ENCODE measurements at regions of chr12 and their contacts with region 1.

Region 1: GRCh38 chr12:6807170-6807569 is 14.5 kb upstream of the GPR162 start:
- DNase-seq: no peak
- H3K4me3 ChIP-seq: no peak overlapping the region
- H3K27ac ChIP-seq: no peak overlapping the region
- H3K4me1 ChIP-seq: no peaks in the 10 kb centered on the region
- H3K27me3 ChIP-seq: no peaks in the 10 kb centered on the region
- CTCF ChIP-seq: no peak

Region 2: DNA sequence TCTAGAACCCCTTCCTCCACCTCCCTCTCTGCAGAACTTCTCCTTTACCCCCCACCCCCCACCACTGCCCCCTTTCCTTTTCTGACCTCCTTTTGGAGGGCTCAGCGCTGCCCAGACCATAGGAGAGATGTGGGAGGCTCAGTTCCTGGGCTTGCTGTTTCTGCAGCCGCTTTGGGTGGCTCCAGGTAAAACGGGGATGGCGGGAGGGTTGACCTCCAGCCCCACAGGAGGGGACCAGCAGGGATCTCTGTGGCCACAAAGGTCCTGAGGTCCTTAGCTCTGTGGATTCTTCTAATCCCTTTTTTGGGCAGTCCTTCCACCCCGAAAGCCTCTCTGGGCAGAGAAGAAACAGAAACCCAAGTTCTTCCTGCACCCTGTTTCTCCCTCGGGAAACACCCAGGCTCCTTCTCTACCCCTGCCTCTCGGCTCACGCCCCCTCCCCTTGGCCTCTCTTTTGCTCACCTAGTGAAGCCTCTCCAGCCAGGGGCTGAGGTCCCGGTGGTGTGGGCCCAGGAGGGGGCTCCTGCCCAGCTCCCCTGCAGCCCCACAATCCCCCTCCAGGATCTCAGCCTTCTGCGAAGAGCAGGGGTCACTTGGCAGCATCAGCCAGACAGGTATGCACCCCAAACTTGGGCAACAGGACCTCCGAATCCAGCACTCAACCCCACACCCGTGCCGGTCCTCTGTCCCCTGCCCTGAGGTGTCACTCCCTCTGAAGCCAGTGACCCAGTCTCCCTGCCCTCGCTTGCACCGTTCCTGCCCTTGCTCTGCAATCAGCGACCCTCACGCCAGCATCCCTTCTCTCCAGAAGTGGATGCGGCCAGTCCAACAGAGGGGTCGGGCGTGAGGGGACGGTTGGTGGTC is 34.2 kb before region 1 on chr12:
- CTCF ChIA-PET with region 1: no interaction called
- POLR2A ChIA-PET with region 1: interaction called, 25 read pairs
- intact Hi-C with region 1: no loop called
- DNase-seq: no peak
- H3K4me3 ChIP-seq: no peak overlapping the region
- H3K27ac ChIP-seq: no peak overlapping the region
- H3K4me1 ChIP-seq: peaks cover 10% of the 10 kb centered on the region
- H3K27me3 ChIP-seq: no peaks in the 10 kb centered on the region
- CTCF ChIP-seq: no peak

Region 3: DNA sequence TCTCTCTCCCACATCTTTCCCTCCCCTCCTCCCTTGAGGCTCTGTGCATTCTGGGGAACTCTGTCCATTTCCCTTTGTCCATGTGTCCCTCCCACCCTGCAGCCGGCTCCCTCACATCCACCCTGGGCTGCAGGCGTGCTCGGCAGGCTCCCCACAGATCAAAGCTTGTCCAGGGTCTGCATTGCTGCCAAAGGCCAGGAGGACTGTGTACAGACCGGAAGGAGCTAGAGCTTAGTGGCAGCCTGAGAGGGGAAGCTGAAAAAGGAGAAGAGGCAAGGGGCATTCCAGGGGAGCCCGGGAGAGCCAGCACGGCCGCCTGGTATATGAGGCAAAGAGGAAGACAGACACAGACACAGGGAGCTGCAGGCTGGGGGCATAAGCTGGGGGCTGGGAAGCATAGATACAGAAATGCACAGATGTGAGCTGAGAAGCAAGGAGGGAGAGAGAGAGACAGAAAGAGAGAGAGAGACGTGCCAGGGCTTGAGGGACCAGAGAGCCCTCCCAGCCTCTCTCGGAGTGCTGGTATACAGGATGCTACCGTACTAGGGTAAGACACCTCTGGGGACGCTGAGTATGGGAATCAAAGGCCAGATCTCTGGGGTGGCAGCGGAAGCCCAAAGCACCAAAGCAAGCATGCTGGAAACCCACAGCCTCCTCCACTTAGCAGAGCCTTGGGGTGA is 14.5 kb before region 1 on chr12:
- CTCF ChIA-PET with region 1: interaction called, 10 read pairs
- POLR2A ChIA-PET with region 1: no interaction called
- intact Hi-C with region 1: no loop called
- DNase-seq: no peak
- H3K4me3 ChIP-seq: no peak overlapping the region
- H3K27ac ChIP-seq: no peak overlapping the region
- H3K4me1 ChIP-seq: no peaks in the 10 kb centered on the region
- H3K27me3 ChIP-seq: peaks cover 52% of the 10 kb centered on the region
- CTCF ChIP-seq: no peak

Region 4: DNA sequence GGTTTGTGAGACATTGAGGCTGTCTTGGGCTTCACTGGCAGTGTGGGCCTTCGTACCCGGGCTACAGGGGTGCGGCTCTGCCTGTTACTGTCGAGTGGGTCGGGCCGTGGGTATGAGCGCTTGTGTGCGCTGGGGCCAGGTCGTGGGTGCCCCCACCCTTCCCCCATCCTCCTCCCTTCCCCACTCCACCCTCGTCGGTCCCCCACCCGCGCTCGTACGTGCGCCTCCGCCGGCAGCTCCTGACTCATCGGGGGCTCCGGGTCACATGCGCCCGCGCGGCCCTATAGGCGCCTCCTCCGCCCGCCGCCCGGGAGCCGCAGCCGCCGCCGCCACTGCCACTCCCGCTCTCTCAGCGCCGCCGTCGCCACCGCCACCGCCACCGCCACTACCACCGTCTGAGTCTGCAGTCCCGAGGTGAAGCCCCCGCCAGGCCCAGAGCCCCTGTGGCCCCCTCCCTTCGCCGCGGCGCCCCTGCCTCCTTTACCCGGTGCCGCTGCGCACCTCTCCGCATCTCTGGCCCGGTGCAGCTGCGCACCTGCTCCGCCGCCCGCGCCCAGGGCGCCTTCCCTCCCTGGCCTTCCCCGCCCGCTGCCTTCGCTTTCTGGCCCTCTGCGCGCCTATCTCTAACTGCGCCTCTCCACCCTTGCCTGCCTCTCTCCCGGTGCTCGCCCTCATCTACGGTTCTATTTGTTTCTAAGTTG is 107.2 kb after region 1 on chr12 and contains the start of gene ENO2:
- CTCF ChIA-PET with region 1: no interaction called
- POLR2A ChIA-PET with region 1: no interaction called
- intact Hi-C with region 1: no loop called
- DNase-seq: peak in 1 of 2 experiments; percentile 75
- H3K4me3 ChIP-seq: peak within 1 kb of the TSS; percentile 77
- H3K27ac ChIP-seq: no peak within 1 kb of the TSS
- H3K4me1 ChIP-seq: peaks cover 5% of the 10 kb centered on the region; the same call in 1 of the 2 replicates
- H3K27me3 ChIP-seq: peaks cover 11% of the 10 kb centered on the region
- CTCF ChIP-seq: no peak
- total RNA-seq, gene ENO2: 38.8 and 56.6 TPM in 2 replicates

Region 5: DNA sequence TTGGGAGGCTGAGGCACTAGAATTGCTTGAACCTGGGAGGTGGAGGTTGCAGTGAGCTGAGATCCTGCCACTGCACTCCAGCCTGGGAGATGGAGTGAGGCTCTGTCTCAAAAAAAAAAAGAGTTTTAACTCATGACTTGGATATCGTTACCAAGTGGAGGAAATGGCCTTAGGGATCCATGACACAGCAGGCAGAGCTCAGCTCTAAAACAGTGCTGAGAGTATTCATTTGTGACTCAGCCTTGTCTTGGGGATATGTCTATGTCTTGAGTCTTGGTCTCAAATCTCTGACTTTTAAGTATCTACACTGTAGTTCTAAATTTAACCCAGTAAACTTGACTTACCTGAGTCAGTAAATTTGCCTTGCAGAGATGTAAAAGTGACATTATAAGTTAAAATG is 373.5 kb after region 1 on chr12:
- CTCF ChIA-PET with region 1: no interaction called
- POLR2A ChIA-PET with region 1: interaction called, 11 read pairs
- intact Hi-C with region 1: no loop called
- DNase-seq: peak in 1 of 2 experiments; percentile 25
- H3K4me3 ChIP-seq: no peak overlapping the region
- H3K27ac ChIP-seq: no peak overlapping the region
- H3K4me1 ChIP-seq: no peaks in the 10 kb centered on the region
- H3K27me3 ChIP-seq: peaks cover 9% of the 10 kb centered on the region; the same call in 1 of the 2 replicates
- CTCF ChIP-seq: no peak